MCF 10A (cell line): ENCODE measurements at regions of chr20 and their contacts with region 1.

Region 1: GRCh38 chr20:62386383-62387218 is at the start of gene RPS21:
- DNase-seq: peak; percentile 89
- H3K4me3 Mint-ChIP-seq: peak within 1 kb of the TSS; percentile 92
- H3K27ac Mint-ChIP-seq: peak within 1 kb of the TSS; percentile 96
- H3K4me1 Mint-ChIP-seq: peaks cover 13% of the 10 kb centered on the region
- H3K27me3 Mint-ChIP-seq: no peaks in the 10 kb centered on the region
- CTCF ChIP-seq: no peak
- total RNA-seq, gene RPS21: 1,978 and 2,055 TPM in 2 replicates

Region 2: GRCh38 chr20:62302341-62303058 is 84.1 kb before region 1 on chr20 and contains the start of gene ADRM1:
- CTCF ChIA-PET with region 1: interaction called, 33 read pairs
- POLR2A ChIA-PET with region 1: interaction called, 63 read pairs
- intact Hi-C with region 1: loop called (anchors 1 kb)
- DNase-seq: peak; percentile 95
- H3K4me3 Mint-ChIP-seq: peak within 1 kb of the TSS; percentile 90
- H3K27ac Mint-ChIP-seq: peak within 1 kb of the TSS; percentile 95
- H3K4me1 Mint-ChIP-seq: peaks cover 18% of the 10 kb centered on the region
- H3K27me3 Mint-ChIP-seq: no peaks in the 10 kb centered on the region
- CTCF ChIP-seq: peak; percentile 95
- total RNA-seq, gene ADRM1: 98.0 and 127 TPM in 2 replicates

Region 3: GRCh38 chr20:62344782-62345181 is 41.8 kb before region 1 on chr20:
- CTCF ChIA-PET with region 1: interaction called, 24 read pairs
- POLR2A ChIA-PET with region 1: interaction called, 48 read pairs
- intact Hi-C with region 1: no loop called
- DNase-seq: no peak
- H3K4me3 Mint-ChIP-seq: no peak overlapping the region
- H3K27ac Mint-ChIP-seq: no peak overlapping the region
- H3K4me1 Mint-ChIP-seq: peaks cover 4% of the 10 kb centered on the region
- H3K27me3 Mint-ChIP-seq: no peaks in the 10 kb centered on the region
- CTCF ChIP-seq: no peak

Region 4: GRCh38 chr20:62357187-62357667 is 29.4 kb before region 1 on chr20:
- CTCF ChIA-PET with region 1: interaction called, 24 read pairs
- POLR2A ChIA-PET with region 1: interaction called, 307 read pairs
- intact Hi-C with region 1: loop called (anchors 1 kb)
- DNase-seq: peak; percentile 73
- H3K4me3 Mint-ChIP-seq: no peak overlapping the region
- H3K27ac Mint-ChIP-seq: no peak overlapping the region
- H3K4me1 Mint-ChIP-seq: peaks cover 34% of the 10 kb centered on the region
- H3K27me3 Mint-ChIP-seq: no peaks in the 10 kb centered on the region
- CTCF ChIP-seq: no peak

Region 5: GRCh38 chr20:62376112-62377063 is 10.2 kb before region 1 on chr20:
- CTCF ChIA-PET with region 1: interaction called, 17 read pairs
- POLR2A ChIA-PET with region 1: interaction called, 307 read pairs
- intact Hi-C with region 1: no loop called
- DNase-seq: peak; percentile 52
- H3K4me3 Mint-ChIP-seq: no peak overlapping the region
- H3K27ac Mint-ChIP-seq: no peak overlapping the region
- H3K4me1 Mint-ChIP-seq: peaks cover 11% of the 10 kb centered on the region
- H3K27me3 Mint-ChIP-seq: no peaks in the 10 kb centered on the region
- CTCF ChIP-seq: no peak